ENCODE measurements at regions of chr9 and their contacts with region 1.

Region 1: DNA sequence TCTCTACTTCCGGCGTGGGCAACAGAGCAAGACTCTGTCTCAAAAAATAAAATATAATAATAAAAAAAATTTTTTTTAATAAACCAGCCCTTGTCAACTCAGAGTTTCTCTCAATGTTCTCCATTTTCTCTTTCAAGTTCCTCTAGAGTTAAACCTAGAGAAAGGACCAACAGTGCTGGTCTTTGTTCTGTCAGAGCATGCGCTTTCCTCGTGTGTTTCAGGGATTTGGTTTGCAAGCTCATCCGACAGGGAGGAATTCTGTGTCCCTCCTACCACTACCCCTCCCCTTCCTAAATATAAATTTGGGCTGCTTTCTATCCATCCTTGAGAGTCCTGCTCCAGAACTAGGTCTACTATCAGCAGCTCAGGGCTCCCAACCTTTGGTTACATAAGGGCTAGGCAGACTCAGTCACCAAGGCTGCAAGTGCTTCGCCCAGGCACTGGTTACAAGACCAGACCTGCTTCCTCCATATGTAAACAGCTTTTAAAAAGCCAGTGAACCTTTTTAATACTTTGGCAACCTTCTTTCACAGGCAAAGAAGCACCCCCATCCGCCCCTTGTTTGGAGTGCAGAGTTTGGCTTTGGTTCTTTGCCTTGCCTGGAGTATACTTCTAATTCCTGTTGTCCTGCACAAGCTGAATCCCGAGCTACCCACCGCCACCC is 13.5 kb downstream of the SETX start:
- DNase-seq: no peak
- H3K4me3 ChIP-seq: no peak overlapping the region
- H3K27ac ChIP-seq: no peak overlapping the region
- H3K4me1 ChIP-seq: no peaks in the 10 kb centered on the region
- H3K27me3 ChIP-seq: no peaks in the 10 kb centered on the region
- CTCF ChIP-seq: no peak
- POLR2A ChIP-seq: no peak

Region 2: DNA sequence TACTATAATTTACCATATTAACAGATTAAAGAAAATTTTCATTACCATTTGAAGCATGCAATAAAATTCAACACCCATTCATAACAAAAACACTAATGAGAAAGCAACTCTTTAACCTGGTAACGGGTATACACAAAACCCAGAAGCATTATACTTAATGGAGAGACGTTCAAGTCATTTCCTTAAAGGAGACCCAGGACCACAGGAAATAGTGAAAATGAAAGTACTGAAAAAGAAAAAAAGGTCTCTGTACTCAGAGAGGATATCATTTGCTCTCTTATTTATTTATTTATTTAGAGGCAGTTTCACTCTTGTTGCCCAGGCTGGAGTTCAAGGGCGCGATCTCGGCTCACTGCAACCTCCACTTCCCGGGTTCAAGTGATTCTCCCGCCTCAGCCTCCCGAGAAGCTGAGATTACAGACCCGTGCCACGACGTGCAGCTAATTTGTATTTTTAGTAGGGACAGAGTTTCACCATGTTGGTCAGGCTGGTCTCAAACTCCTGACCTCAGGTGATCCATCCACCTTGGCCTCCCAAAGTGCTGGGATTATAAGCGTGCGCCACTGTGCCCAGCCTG is 48.1 kb before region 1 on chr9:
- intact Hi-C with region 1: loop called in 1 of 2 experiments (anchors 10 kb)
- DNase-seq: no peak
- H3K4me3 ChIP-seq: no peak overlapping the region
- H3K27ac ChIP-seq: no peak overlapping the region
- H3K4me1 ChIP-seq: peaks cover 10% of the 10 kb centered on the region in 2 donors
- H3K27me3 ChIP-seq: no peaks in the 10 kb centered on the region
- CTCF ChIP-seq: no peak
- POLR2A ChIP-seq: no peak

Measured in adrenal gland (tissue), 19 donors.